ENCODE measurements at regions of chr1 and their contacts with region 1.

Region 1: DNA sequence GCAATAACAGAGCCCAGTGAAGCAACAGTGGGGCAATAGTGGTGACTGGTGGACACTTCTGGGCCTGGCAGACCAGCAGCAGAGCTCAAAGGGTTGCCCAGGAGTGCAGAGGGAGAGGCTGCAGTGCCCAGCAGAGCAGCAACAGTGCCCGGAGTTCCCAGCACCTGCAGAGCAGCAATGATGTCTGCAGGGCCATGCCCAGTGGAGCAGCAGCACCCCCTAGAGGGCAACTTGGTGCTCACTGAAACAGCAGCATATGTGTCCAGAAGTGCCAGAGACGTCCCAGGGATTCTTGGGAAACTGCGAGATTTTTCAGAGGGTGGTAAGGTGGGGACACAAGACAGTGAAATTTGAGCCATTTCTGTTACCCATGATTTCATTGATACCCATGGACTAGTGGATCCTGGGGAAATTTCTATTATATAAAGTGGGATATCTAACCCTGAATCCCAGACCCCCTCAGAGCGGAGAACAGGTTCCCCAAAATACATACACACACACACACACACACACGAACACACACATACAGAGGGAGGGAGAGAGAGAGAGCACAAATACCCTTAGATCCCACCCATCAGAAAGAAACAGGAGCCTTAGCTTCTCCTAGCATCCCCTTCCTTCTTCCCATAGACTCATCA is 156.9 kb upstream of the GJB5 start:
- ATAC-seq: peak; percentile 92 to 100 (median 98)
- H3K4me3 ChIP-seq: no peak overlapping the region
- H3K27ac ChIP-seq: no peak overlapping the region
- H3K4me1 ChIP-seq: no peaks in the 10 kb centered on the region

Region 2: GRCh38 chr1:34199927-34200326 is 398.1 kb before region 1 on chr1:
- in situ Hi-C with region 1: loop called in 1 of 9 experiments (anchors 25 kb)
- ATAC-seq: peak in 1 of 8 experiments; percentile 47
- H3K4me3 ChIP-seq: no peak overlapping the region
- H3K27ac ChIP-seq: no peak overlapping the region
- H3K4me1 ChIP-seq: no peaks in the 10 kb centered on the region

Measured in motor neuron (in vitro differentiated cells).